ENCODE measurements at regions of chr6 and their contacts with region 1.

Region 1: DNA sequence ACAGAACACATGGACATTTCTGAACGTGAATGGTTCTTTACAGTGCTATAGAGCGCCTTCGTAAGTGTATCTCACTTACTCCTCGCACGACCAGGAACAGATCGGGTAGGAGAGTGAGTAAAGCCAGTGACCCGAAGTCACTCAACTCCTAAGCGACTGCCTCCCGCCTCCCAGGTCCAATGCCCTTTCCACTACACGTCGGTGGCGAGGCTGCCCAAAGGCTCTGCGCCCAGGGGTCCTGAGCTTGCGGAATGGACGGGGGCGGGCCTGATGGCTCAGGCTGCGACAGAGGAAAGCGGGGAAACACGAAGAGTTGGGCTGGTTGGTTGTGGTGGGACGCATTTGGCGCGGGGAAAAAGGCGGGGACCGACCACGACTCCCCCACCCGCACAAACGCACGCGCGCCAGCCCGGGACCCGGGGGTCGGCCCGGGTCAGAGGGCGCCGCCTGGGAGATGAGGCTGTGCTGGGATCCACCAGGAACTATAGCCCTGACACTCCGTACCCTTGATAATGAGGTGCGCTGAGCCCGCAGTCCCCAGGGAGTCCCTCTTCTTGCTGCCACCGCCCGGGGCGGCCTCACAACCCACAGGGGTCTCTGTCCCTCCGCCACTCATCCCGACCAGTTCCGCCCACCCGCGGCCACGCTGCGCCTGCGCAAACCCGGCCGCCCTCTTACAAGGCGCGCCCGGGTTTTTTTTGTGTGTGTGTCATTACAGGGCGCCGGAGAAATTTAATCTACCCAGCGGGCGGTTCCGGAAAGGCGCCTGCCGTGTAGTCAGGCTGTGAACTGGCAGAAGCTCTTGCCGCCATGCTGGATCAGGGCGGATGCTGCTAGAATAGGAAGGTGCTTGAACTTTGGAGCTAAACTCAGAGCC is at the start of gene BLOC1S5:
- DNase-seq: peak; percentile 98
- ATAC-seq: peak; percentile 97
- H3K4me3 Mint-ChIP-seq: peak within 1 kb of the TSS; percentile 93
- H3K27ac Mint-ChIP-seq: peak within 1 kb of the TSS; percentile 96
- H3K4me1 Mint-ChIP-seq: peaks cover 29% of the 10 kb centered on the region
- H3K27me3 Mint-ChIP-seq: no peaks in the 10 kb centered on the region
- total RNA-seq, gene BLOC1S5: 21.5 to 21.6 TPM

Region 2: GRCh38 chr6:7725849-7726415 is 338.1 kb before region 1 on chr6 and contains the start of gene BMP6:
- CTCF ChIA-PET with region 1: interaction called, 63 read pairs
- POLR2A ChIA-PET with region 1: no interaction called
- DNase-seq: peak; percentile 76
- ATAC-seq: peak; percentile 85
- H3K4me3 Mint-ChIP-seq: peak within 1 kb of the TSS; percentile 69
- H3K27ac Mint-ChIP-seq: no peak within 1 kb of the TSS
- H3K4me1 Mint-ChIP-seq: peaks cover 17% of the 10 kb centered on the region
- H3K27me3 Mint-ChIP-seq: peaks cover 68% of the 10 kb centered on the region
- total RNA-seq, gene BMP6: not detected

Region 3: DNA sequence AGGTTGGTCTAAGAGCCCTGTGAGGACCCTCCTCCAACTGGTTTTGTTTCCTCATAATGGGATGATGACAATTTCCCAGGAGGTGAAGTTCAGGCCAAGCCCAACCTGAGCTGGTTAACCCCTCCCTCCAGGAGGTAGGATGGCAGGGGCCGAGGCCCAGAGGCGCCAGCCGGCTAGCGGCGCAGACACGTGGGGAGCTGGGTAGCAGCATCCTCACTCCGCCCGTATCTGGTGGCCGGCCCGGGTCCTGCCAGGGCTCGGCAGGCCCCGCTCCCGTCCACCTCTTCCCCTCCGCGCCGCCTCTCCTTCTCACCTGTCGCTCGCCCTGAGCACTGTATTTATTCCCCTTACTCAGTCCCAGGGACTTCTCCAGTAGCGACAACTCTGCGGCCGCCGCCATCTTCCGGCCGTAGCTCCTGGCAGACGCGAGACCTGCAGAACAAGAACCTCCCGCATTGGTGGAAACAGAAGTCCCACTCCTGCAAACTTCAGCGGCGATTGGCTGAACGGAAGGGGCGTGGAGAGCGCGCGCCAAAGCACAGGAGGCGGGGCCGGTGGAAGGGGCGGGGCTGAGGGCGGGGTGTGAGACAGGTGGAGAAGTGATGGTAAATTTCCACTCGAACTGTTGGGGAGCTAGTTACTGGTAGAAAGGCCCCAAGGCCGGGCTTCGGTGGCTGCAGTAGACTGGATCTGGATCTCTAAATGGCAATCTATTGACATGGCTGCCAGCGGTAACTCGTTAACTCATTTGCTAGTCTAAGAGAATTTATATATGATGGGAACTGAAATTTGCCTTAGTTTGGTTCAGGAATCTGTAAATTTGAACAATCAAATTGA is 38.3 kb after region 1 on chr6 and contains the start of gene EEF1E1:
- CTCF ChIA-PET with region 1: interaction called, 10 read pairs
- POLR2A ChIA-PET with region 1: interaction called, 35 read pairs
- DNase-seq: peak; percentile 98
- ATAC-seq: peak; percentile 98
- H3K4me3 Mint-ChIP-seq: peak within 1 kb of the TSS; percentile 92
- H3K27ac Mint-ChIP-seq: peak within 1 kb of the TSS; percentile 94
- H3K4me1 Mint-ChIP-seq: peaks cover 29% of the 10 kb centered on the region
- H3K27me3 Mint-ChIP-seq: peaks cover 12% of the 10 kb centered on the region
- total RNA-seq, gene EEF1E1: 42.2 to 44.2 TPM

Measured in activated CD8-positive, alpha-beta T cell treated with anti-CD3 and anti-CD28 coated beads, Interleukin-2, amount 10 ng/mL, durations not matched to agents 7 days and 5 days (primary cell).